IMR-90 (cell line): ENCODE measurements at regions of chr1 and their contacts with region 1.

Region 1: DNA sequence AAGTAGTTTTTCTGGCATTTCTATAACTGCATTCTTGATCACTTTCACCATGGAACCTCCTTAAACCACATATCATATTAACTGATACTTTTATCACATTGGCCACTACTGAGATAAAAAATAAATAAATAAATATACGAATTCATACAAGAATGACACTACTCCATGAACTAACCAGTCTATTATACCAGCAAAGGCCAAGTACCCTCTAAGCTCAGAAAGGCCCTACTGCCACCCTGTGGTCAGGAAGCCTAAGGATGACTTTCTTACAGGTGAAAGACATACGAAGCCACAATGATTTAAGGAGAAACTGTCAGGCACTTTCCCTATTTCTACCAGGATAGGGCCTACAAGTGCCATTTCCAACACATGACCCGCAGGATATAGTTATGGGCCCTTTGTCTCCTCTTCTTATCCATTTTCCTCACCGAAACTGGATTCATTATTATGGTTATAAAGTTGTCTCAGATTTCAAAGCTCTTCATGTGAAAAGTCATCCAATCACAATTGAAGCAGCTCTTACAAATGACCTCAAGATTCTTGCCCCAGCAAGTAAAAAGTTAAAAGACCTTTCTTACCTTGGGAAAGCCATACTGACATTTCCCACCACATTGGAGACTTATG is 23.9 kb downstream of the DNAJC8 start:
- DNase-seq: peak; percentile 76
- ATAC-seq: peak; percentile 97
- H3K4me3 ChIP-seq: no peak overlapping the region
- H3K27ac ChIP-seq: no peak overlapping the region
- H3K4me1 ChIP-seq: no peaks in the 10 kb centered on the region
- H3K27me3 ChIP-seq: no peaks in the 10 kb centered on the region
- CTCF ChIP-seq: peak; percentile 84
- POLR2A ChIP-seq: no peak
- RAD21 ChIP-seq: peak; percentile 97

Region 2: DNA sequence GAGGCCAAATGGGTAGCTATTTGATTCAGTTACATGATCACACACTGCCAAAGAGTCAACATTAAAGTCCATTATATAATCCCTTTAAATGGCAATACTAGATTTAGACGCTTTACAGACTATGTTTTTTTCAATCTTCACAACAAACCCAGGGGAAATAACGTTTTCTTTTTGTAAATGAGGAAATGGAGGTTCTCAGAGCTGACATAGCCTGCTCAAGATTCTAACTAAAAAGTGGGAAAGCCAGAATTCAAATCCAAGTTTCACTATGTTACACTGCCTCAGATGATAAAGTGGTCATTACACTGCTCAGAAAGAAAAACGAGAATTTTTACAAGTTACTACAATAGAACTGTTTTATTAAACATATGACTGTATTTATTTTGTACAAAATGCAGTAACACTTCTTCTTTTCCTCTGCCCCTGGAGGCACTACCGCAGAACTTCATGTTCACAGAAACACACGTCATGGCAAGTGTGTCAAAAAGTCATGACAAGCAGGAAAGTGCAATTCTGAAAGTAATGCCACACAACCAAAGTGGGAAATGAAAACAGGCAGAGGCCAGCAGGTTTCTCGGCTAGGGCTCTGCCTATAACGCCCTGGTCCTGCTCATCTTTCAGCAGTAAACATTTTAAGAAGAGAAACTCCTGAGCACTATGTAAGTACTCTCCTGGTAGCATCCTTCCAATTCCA is 317.6 kb before region 1 on chr1:
- CTCF ChIA-PET with region 1: no interaction called
- POLR2A ChIA-PET with region 1: no interaction called
- dilution Hi-C with region 1: no loop called
- in situ Hi-C with region 1: no loop called
- intact Hi-C with region 1: no loop called
- DNase-seq: no peak
- ATAC-seq: no peak
- H3K4me3 ChIP-seq: no peak overlapping the region
- H3K27ac ChIP-seq: no peak overlapping the region
- H3K4me1 ChIP-seq: no peaks in the 10 kb centered on the region
- H3K27me3 ChIP-seq: no peaks in the 10 kb centered on the region
- CTCF ChIP-seq: no peak
- POLR2A ChIP-seq: no peak
- RAD21 ChIP-seq: no peak

Region 3: DNA sequence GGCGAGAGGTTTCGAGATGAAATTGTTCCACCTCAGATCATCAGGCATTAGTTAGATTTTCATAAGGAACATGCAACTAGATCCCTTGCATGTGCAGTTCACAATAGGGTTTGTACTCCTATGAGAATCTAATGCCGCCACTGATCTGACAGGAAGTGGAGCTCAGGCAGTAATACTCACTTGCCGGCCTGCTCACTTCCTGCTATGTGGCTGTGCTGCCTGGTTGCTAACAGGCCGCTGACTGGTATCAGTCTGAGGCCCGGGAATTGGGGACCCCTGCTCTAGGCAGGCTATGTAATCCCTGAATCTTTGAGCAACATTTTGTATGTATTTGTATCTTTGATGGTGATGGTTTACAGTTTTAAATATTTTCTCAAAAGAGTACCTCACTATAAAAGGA is 216.7 kb before region 1 on chr1:
- CTCF ChIA-PET with region 1: no interaction called
- POLR2A ChIA-PET with region 1: no interaction called
- dilution Hi-C with region 1: no loop called
- in situ Hi-C with region 1: no loop called
- intact Hi-C with region 1: loop called (anchors 5 kb)
- DNase-seq: no peak
- ATAC-seq: no peak
- H3K4me3 ChIP-seq: no peak overlapping the region
- H3K27ac ChIP-seq: no peak overlapping the region
- H3K4me1 ChIP-seq: no peaks in the 10 kb centered on the region
- H3K27me3 ChIP-seq: no peaks in the 10 kb centered on the region
- CTCF ChIP-seq: no peak
- POLR2A ChIP-seq: no peak
- RAD21 ChIP-seq: no peak

Region 4: DNA sequence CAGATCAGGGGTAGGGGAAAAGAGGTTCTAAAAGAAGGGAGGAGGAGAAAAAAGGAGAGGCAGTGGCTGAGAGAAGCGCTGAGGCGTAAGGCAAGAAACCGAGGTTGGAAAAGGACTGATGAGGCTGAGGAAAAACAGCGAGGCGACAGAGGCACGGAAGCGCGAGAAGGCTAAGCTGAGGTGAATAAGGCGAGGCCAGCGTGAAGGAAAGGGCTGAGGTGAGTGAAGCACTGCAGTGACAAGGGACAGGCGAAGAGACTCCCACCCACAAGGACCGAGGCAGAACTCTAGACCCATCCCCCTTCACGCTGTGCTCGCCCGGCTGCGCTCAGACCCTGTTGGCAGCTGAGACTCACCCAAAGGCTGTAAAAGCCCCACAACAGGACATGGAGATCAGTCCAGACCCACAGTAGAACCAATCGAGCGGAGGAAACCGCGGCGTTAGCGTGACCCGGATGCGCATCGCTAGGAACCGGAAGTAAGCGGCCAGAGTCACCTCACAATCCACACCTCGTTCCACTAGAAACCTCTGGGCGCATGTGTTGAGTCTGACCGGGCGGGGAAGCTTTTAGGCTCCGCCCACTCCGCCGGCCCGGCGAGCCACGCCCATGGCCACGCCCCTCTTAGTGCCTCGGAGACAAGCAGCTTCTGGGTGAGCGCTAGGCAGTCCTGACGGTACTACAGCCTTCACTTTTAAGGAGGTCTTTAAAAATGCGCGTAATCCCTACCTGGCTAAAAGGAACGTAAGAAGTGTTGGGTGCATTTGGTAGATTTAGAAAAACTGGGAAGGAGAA is 120.6 kb before region 1 on chr1 and contains the start of gene EYA3:
- CTCF ChIA-PET with region 1: interaction called, 32 read pairs
- POLR2A ChIA-PET with region 1: interaction called, 3 read pairs
- dilution Hi-C with region 1: no loop called
- in situ Hi-C with region 1: loop called (anchors 5 kb)
- intact Hi-C with region 1: loop called (anchors 1 kb)
- DNase-seq: peak; percentile 98
- ATAC-seq: peak; percentile 98
- H3K4me3 ChIP-seq: peak within 1 kb of the TSS; percentile 76
- H3K27ac ChIP-seq: peak within 1 kb of the TSS; percentile 79
- H3K4me1 ChIP-seq: no peaks in the 10 kb centered on the region; the same call in 1 of the 2 replicates
- H3K27me3 ChIP-seq: no peaks in the 10 kb centered on the region
- CTCF ChIP-seq: no peak
- POLR2A ChIP-seq: peak; percentile 65
- RAD21 ChIP-seq: no peak
- total RNA-seq, gene EYA3: 14.4 and 17.6 TPM in 2 replicates

Region 5: DNA sequence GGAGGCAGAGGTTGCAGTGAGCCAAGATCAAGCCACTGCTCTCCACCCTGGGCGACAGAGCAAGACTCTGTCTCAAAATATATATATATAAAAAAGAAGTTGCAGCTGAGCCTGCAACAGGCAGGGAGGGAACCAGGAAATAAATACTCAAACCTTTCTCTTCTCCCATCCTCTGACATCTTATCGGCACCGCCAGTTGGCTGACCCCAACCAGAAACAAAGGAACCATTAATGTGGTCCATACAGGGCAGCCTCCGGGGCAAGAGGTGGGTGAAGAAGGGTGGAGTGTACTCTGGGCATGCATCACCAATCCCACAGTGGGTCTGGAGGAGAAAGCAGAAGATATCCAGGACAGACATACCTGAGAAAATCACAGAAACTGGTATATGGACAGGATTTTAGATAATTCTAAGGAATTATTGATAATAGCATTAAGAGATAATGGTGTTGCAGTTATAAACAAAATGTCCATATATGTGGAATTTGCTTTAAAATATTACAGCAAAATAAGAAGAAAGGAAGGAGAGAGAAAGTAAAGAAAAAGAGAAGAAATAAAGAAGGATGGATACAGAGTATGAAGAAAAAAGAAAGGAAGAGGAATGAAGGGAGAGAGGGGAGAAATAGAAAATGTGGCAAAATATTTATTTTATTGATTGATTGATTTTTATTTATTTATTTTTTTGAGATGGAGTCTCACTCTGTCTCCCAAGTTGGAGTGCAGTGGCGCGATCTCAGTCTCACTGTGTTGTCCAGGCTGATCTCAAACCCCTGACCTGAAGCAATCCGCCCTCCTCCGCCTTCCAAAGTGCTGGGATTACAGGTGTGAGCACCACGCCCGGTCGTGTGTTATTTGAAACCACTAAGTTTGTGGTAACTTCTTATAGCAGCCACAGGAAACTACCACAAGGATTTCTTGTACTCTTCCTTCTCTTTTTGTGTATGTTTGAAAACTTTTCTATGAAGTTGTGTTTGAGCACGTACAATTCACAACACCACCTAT is 28.3 kb before region 1 on chr1:
- CTCF ChIA-PET with region 1: no interaction called
- POLR2A ChIA-PET with region 1: no interaction called
- dilution Hi-C with region 1: no loop called
- in situ Hi-C with region 1: no loop called
- intact Hi-C with region 1: no loop called
- DNase-seq: no peak
- ATAC-seq: no peak
- H3K4me3 ChIP-seq: no peak overlapping the region
- H3K27ac ChIP-seq: no peak overlapping the region
- H3K4me1 ChIP-seq: peaks cover 9% of the 10 kb centered on the region
- H3K27me3 ChIP-seq: no peaks in the 10 kb centered on the region
- CTCF ChIP-seq: no peak
- POLR2A ChIP-seq: no peak
- RAD21 ChIP-seq: no peak